PC-3 (cell line): ENCODE measurements at regions of chr4 and their contacts with region 1.

Region 1: GRCh38 chr4:66575024-66575696 is 904.9 kb upstream of the EPHA5 start:
- DNase-seq: peak; percentile 98
- ATAC-seq: peak; percentile 83
- H3K4me3 ChIP-seq: peak overlapping the region; percentile 60
- H3K27ac ChIP-seq: peak overlapping the region; percentile 93
- H3K4me1 ChIP-seq: peaks cover 51% of the 10 kb centered on the region
- H3K27me3 ChIP-seq: no peaks in the 10 kb centered on the region
- CTCF ChIP-seq: no peak

Region 2: DNA sequence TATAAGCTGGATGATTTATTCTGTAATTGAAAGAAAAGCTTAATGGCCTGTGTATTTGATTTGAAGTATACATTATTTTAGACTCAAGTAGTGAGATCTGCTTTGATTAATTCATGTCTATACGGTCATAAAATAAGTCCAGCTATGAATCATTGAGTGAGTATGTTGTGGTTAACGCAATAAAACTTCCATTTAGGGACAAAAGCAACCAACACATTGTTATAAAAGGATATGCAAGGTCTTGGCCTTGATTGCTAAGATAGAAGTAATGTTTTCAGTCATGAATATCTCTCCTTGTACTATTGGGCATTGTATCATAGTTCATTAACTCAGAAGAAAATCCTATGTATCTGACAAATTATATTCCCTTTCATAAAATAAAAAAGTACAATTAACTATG is 1067.0 kb before region 1 on chr4:
- CTCF ChIA-PET with region 1: no interaction called
- POLR2A ChIA-PET with region 1: no interaction called
- intact Hi-C with region 1: loop called (anchors 10 kb)
- DNase-seq: peak; percentile 98
- ATAC-seq: peak; percentile 72
- H3K4me3 ChIP-seq: 0 out of 2 replicates have a peak overlapping the region, but pooled peaks have one; percentile 12
- H3K27ac ChIP-seq: peak overlapping the region; percentile 79
- H3K4me1 ChIP-seq: peaks cover 46% of the 10 kb centered on the region
- H3K27me3 ChIP-seq: no peaks in the 10 kb centered on the region
- CTCF ChIP-seq: no peak

Region 3: GRCh38 chr4:66300336-66300934 is 274.7 kb before region 1 on chr4:
- CTCF ChIA-PET with region 1: no interaction called
- POLR2A ChIA-PET with region 1: no interaction called
- intact Hi-C with region 1: loop called (anchors 1 kb)
- DNase-seq: peak; percentile 89
- ATAC-seq: peak; percentile 81
- H3K4me3 ChIP-seq: no peak overlapping the region
- H3K27ac ChIP-seq: peak overlapping the region; percentile 79
- H3K4me1 ChIP-seq: peaks cover 41% of the 10 kb centered on the region
- H3K27me3 ChIP-seq: no peaks in the 10 kb centered on the region
- CTCF ChIP-seq: no peak

Region 4: DNA sequence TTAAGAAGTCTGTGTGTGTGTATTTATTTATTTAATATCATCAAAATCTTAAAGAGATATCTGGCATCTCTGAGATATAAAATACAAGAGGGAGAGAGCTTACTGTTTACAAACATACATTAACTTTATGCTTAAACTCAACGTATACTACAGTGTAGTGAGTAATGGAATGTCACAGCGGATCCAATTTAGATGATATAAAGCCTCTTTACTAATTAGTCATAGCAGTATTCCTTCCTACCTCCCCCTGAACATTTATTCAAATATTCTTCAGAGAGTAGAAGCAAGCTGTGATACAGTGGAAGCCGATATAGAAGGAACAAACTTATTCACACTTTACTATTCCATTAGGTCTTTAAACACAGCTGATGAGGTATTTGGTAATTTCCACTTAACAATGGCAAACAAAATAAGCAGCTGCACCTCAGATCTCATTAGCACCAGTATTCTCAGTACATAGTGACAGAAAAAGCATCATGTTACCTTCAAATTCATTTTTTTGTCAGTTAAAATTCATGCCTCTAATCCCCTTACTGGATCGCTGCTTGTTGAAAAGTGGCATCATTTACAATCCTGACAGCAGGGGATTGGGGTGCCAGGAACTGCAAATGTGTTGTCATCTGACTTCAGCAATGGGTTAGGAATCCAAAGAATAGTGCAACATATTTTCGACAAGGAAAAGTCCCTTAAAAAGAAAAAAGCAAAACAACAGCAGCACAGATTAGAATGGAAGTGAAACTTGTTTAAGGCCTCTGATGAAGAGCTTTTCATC is 246.2 kb before region 1 on chr4:
- CTCF ChIA-PET with region 1: no interaction called
- POLR2A ChIA-PET with region 1: no interaction called
- intact Hi-C with region 1: no loop called
- DNase-seq: no peak
- ATAC-seq: no peak
- H3K4me3 ChIP-seq: no peak overlapping the region
- H3K27ac ChIP-seq: no peak overlapping the region
- H3K4me1 ChIP-seq: peaks cover 4% of the 10 kb centered on the region; the same call in 1 of the 2 replicates
- H3K27me3 ChIP-seq: no peaks in the 10 kb centered on the region
- CTCF ChIP-seq: no peak

Region 5: GRCh38 chr4:66357316-66357715 is 217.8 kb before region 1 on chr4:
- CTCF ChIA-PET with region 1: no interaction called
- POLR2A ChIA-PET with region 1: no interaction called
- intact Hi-C with region 1: loop called (anchors 10 kb)
- DNase-seq: peak; percentile 53
- ATAC-seq: no peak
- H3K4me3 ChIP-seq: no peak overlapping the region
- H3K27ac ChIP-seq: no peak overlapping the region
- H3K4me1 ChIP-seq: peaks cover 28% of the 10 kb centered on the region
- H3K27me3 ChIP-seq: no peaks in the 10 kb centered on the region
- CTCF ChIP-seq: no peak

Region 6: DNA sequence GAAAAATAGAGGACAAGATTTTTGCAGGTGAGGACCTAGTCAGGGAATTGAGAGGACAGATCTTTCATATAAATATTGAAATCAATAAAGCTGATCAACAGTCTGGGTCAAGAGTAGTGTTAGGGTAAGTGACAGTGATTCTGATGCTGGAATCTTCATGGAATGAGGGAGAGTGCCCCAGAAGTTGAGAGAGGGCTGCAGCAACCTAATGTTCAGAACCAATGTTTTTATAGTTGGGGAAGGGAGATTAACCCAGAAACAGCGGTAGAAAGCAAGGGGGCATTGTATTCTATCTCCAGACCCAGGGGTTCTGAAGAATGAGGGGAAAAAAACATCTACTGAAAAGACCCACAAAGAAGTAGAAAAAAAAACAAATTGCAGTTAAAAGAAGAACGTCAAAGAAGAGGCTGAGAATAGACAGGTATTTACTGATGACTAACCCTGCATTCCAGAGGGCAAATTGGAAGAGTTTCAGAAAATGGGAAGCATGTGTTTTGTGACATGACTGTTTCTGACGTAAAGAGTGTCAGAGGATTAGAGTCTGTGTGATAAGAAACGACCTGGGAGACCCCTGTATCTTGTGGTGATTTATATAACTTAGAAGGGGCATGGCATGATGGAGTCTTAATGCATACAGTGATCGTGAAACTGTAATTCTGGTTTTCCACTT is 85.2 kb before region 1 on chr4:
- CTCF ChIA-PET with region 1: no interaction called
- POLR2A ChIA-PET with region 1: no interaction called
- intact Hi-C with region 1: loop called (anchors 5 kb)
- DNase-seq: peak; percentile 96
- ATAC-seq: peak; percentile 96
- H3K4me3 ChIP-seq: peak overlapping the region; percentile 16; the same call in 1 of the 2 replicates
- H3K27ac ChIP-seq: peak overlapping the region; percentile 39
- H3K4me1 ChIP-seq: peaks cover 18% of the 10 kb centered on the region
- H3K27me3 ChIP-seq: no peaks in the 10 kb centered on the region
- CTCF ChIP-seq: no peak

Region 7: DNA sequence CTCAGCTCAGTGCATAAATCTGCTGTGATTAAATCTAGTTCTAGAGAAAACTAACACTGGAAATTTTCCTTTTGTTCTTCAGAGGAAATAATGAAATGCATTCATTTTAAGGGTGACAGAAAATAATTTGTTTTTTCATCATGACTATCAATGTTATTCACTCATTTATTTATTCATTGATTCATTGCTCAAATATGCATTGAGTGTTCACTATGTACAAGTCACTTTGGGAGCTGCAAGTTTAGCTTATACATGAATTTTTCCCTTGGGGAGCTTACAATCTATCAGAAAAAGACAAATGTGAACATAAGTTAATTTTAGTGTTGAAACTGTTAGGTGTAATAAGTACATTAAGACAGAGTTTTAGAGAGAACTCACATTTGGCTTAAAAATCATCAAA is 72.3 kb after region 1 on chr4:
- CTCF ChIA-PET with region 1: no interaction called
- POLR2A ChIA-PET with region 1: no interaction called
- intact Hi-C with region 1: loop called (anchors 5 kb)
- DNase-seq: peak; percentile 62
- ATAC-seq: peak; percentile 84
- H3K4me3 ChIP-seq: no peak overlapping the region
- H3K27ac ChIP-seq: no peak overlapping the region
- H3K4me1 ChIP-seq: peaks cover 13% of the 10 kb centered on the region
- H3K27me3 ChIP-seq: no peaks in the 10 kb centered on the region
- CTCF ChIP-seq: no peak